ENCODE measurements at regions of chr1 and their contacts with region 1.

Region 1: DNA sequence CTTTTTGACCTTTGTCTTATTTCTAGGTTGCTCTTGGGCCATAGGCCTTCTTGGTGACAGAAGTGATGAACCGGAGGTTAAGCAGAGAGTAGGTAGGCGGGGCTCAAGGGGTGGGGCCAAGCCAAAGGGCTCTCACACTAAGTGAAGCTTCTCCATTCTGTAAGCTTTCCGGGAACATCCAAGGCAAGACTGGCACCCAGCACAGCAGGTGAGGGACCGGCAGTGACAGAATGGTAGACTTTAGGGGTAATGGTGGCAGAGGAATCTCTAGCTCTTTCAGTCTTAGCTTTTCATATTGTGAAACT is at the start of gene TNFAIP8L2:
- DNase-seq: peak; percentile 54 to 81 (median 62)
- ATAC-seq: peak; percentile 82 to 85
- H3K4me3 Mint-ChIP-seq: peak within 1 kb of the TSS; percentile 96 to 100 (median 99)
- H3K27ac Mint-ChIP-seq: peak within 1 kb of the TSS; percentile 88 to 98 (median 95)
- H3K4me1 Mint-ChIP-seq: peaks cover 27 to 53% (median 49%) of the 10 kb centered on the region in 4 donors
- H3K27me3 Mint-ChIP-seq: no peaks in the 10 kb centered on the region
- polyA plus RNA-seq, gene TNFAIP8L2: 9.9 to 37.4 (median 11.7) TPM

Region 2: DNA sequence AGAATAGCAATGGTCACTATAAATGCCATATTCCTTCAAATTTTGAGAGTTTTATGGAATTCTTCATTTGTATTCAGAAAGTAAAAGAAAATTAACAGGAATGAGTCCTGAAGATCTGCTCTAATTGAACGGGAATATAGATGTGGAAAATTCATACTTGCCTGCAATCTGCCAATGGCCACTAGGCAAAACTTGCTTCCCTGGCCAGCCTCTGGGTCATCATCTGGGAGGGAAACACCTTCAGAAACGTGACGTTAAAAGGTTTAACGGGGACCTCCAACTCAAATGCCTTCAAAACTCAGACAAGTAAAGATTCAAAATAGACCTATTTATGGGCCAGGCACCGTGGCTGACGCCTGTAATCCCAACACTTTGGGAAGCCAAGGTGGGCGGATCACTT is 326.7 kb before region 1 on chr1:
- POLR2A ChIA-PET with region 1: no interaction called
- DNase-seq: no peak
- ATAC-seq: no peak
- H3K4me3 Mint-ChIP-seq: no peak overlapping the region
- H3K27ac Mint-ChIP-seq: no peak overlapping the region
- H3K4me1 Mint-ChIP-seq: no peaks in the 10 kb centered on the region
- H3K27me3 Mint-ChIP-seq: no peaks in the 10 kb centered on the region

Region 3: DNA sequence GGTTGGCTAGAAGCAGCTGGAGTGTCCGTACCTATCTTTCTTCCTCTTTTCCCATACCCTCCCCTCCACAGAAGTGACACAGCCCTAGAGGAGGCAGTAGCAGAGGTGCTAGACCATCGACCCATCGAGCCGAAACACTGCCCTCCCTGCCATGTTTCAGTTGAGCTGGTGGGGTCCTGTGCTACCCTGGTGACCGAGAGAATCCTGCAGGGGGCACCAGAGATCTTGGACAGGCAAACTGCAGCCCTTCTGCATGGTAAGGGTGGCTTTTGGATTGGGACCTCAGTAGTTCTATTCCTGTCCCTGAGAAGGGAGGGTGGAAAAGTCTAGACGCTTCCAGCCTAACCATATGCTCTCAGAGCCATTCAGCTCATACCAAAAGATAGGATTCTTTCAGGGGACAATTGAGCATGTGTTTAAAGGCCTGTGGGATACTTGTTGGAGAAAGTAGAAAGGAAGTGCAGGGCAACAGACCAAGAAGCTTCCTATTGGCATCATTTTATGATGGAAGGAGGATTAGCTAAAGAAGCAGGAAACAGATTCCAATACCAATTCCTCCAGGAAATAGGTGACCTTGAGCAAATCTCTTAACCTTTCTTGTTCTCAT is 131.8 kb before region 1 on chr1:
- POLR2A ChIA-PET with region 1: interaction called, 13 read pairs
- DNase-seq: peak; percentile 77 to 94 (median 88)
- ATAC-seq: peak; percentile 100
- H3K4me3 Mint-ChIP-seq: peak overlapping the region in 9 of 10 donors; percentile 23 to 79 (median 56)
- H3K27ac Mint-ChIP-seq: peak overlapping the region; percentile 11 to 88 (median 71)
- H3K4me1 Mint-ChIP-seq: peaks cover 4 to 8% (median 7%) of the 10 kb centered on the region in 4 donors
- H3K27me3 Mint-ChIP-seq: no peaks in the 10 kb centered on the region

Region 4: GRCh38 chr1:151059078-151059907 is 97.2 kb before region 1 on chr1 and contains the start of gene CDC42SE1:
- POLR2A ChIA-PET with region 1: interaction called, 61 read pairs
- DNase-seq: peak; percentile 75 to 90 (median 82)
- ATAC-seq: peak; percentile 77 to 84
- H3K4me3 Mint-ChIP-seq: peak within 1 kb of the TSS; percentile 93 to 100 (median 98)
- H3K27ac Mint-ChIP-seq: peak within 1 kb of the TSS; percentile 88 to 99 (median 96)
- H3K4me1 Mint-ChIP-seq: peaks cover 35 to 70% (median 52%) of the 10 kb centered on the region in 4 donors
- H3K27me3 Mint-ChIP-seq: no peaks in the 10 kb centered on the region
- polyA plus RNA-seq, gene CDC42SE1: 77.9 to 89.3 (median 80.9) TPM

Region 5: GRCh38 chr1:151098126-151098525 is 58.3 kb before region 1 on chr1:
- POLR2A ChIA-PET with region 1: interaction called, 22 read pairs
- DNase-seq: no peak
- ATAC-seq: no peak
- H3K4me3 Mint-ChIP-seq: no peak overlapping the region
- H3K27ac Mint-ChIP-seq: no peak overlapping the region
- H3K4me1 Mint-ChIP-seq: peaks cover 0 to 2% (median 0%) of the 10 kb centered on the region in 4 donors
- H3K27me3 Mint-ChIP-seq: no peaks in the 10 kb centered on the region

Region 6: DNA sequence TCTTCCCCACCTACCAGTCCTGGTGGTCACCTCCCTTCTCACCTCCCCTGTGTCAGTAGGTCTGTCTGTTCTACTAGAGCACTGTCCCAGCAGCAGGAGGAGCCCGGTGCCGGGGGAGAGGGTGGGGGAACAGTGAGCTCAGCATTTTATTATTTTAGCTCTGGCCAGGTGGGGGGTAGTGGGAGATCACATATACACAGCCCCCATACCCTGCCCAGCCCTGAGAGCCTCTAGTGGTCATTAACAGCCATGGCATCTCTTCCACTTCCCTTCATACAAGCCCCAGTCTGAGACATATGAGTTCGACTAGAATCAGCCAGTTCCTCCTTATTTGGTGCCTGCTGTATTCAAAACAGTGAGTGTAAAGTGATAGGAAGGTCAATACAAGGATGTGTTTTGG is 19.4 kb after region 1 on chr1 and contains the start of gene TMOD4:
- POLR2A ChIA-PET with region 1: interaction called, 15 read pairs
- DNase-seq: no peak
- ATAC-seq: peak; percentile 73 to 78
- H3K4me3 Mint-ChIP-seq: no peak within 1 kb of the TSS
- H3K27ac Mint-ChIP-seq: peak within 1 kb of the TSS in 9 of 10 donors; percentile 8 to 80 (median 57)
- H3K4me1 Mint-ChIP-seq: peaks cover 0 to 14% (median 7%) of the 10 kb centered on the region in 4 donors
- H3K27me3 Mint-ChIP-seq: no peaks in the 10 kb centered on the region
- polyA plus RNA-seq, gene TMOD4: 0.50 to 0.59 TPM in 2 of 3 donors, not detected in the other

Region 7: GRCh38 chr1:151243683-151244216 is 87.3 kb after region 1 on chr1:
- POLR2A ChIA-PET with region 1: no interaction called
- DNase-seq: no peak
- ATAC-seq: no peak
- H3K4me3 Mint-ChIP-seq: no peak overlapping the region
- H3K27ac Mint-ChIP-seq: peak overlapping the region in 2 of 10 donors; percentile 15 to 50
- H3K4me1 Mint-ChIP-seq: no peaks in the 10 kb centered on the region
- H3K27me3 Mint-ChIP-seq: no peaks in the 10 kb centered on the region